CD4-positive, alpha-beta memory T cell (primary cell): ENCODE measurements at regions of chr5 and their contacts with region 1.

Region 1: GRCh38 chr5:10452768-10453331 is 11.2 kb downstream of the ROPN1L start:
- DNase-seq: peak in 4 of 5 donors; percentile 52 to 60 (median 58)
- H3K4me3 ChIP-seq: no peak overlapping the region
- H3K4me3 Mint-ChIP-seq: no peak overlapping the region
- H3K27ac ChIP-seq: no peak overlapping the region
- H3K27ac Mint-ChIP-seq: no peak overlapping the region
- H3K4me1 ChIP-seq: no peaks in the 10 kb centered on the region
- H3K4me1 Mint-ChIP-seq: peaks cover 6 to 23% (median 11%) of the 10 kb centered on the region in 4 donors
- H3K27me3 ChIP-seq: no peaks in the 10 kb centered on the region
- H3K27me3 Mint-ChIP-seq: no peaks in the 10 kb centered on the region

Region 2: DNA sequence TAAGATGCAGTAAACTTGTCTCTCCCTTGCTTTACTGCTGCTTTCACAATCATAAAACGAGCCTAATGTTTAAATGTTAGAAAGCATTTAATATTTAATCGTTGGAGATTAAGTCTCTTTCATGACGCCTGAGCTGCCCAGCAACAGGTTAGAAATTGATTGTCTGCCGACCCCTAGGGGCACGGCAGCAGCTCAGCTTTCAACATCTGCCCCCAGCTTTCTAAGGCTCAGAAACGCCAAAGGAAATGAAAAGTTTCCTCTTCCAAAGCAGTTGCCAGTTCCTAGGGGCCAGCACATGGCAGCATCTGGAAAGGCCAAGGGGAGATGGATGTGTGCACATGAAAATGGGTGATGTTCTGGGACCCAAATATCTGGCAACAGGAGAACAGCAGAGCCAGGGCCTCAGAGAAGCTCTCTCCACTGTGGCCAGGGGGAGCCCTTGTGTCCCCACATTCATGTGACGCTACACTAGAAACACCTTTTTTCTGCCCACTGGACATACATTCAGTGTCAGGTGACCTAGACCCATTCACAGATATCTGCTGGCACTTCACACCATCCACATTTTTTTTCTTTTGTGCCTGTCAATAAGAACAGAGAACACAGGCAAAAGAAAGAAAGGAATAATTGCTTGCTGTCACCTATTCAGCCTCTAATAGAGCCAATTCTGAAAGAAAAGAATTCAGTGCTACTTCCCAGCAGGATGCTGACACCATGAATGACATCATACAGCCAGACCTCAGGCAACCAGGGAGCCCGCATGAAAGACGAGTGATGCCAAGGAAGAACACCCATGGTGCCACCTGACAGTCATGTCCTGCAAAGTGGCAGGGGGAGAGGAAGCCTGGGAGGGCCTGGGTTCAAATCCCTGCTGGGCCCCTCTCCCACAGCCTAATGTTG is 617.7 kb before region 1 on chr5:
- CTCF ChIA-PET with region 1: no interaction called
- POLR2A ChIA-PET with region 1: no interaction called
- intact Hi-C with region 1: no loop called
- DNase-seq: no peak
- H3K4me3 ChIP-seq: no peak overlapping the region
- H3K4me3 Mint-ChIP-seq: no peak overlapping the region
- H3K27ac ChIP-seq: no peak overlapping the region
- H3K27ac Mint-ChIP-seq: no peak overlapping the region
- H3K4me1 ChIP-seq: no peaks in the 10 kb centered on the region
- H3K4me1 Mint-ChIP-seq: no peaks in the 10 kb centered on the region
- H3K27me3 ChIP-seq: no peaks in the 10 kb centered on the region
- H3K27me3 Mint-ChIP-seq: no peaks in the 10 kb centered on the region

Region 3: DNA sequence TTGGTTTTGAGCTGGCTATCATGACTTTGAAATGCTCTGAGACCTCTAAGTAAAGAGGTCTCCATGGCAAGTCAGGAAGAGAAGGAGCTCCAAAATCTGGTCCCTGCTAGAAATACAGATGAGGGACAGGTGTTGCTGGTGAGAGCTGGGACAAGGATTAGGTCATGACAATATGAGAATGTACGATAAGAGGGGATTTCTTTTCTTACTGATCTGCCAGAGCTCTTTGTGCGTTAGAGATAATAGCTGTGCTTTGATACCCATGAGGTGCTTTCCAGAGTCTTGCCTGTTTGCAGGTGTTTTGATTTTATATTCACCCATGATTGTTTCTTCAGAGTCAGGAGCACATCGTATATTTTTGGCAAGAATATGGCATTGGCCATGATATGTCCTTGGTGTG is 167.5 kb after region 1 on chr5:
- CTCF ChIA-PET with region 1: interaction called, 188 read pairs
- POLR2A ChIA-PET with region 1: interaction called, 6 read pairs
- intact Hi-C with region 1: no loop called
- DNase-seq: no peak
- H3K4me3 ChIP-seq: no peak overlapping the region
- H3K4me3 Mint-ChIP-seq: no peak overlapping the region
- H3K27ac ChIP-seq: no peak overlapping the region
- H3K27ac Mint-ChIP-seq: no peak overlapping the region
- H3K4me1 ChIP-seq: no peaks in the 10 kb centered on the region
- H3K4me1 Mint-ChIP-seq: peaks cover 1 to 8% (median 3%) of the 10 kb centered on the region in 4 donors
- H3K27me3 ChIP-seq: no peaks in the 10 kb centered on the region
- H3K27me3 Mint-ChIP-seq: no peaks in the 10 kb centered on the region